ENCODE measurements at regions of chr1 and their contacts with region 1.

Region 1: DNA sequence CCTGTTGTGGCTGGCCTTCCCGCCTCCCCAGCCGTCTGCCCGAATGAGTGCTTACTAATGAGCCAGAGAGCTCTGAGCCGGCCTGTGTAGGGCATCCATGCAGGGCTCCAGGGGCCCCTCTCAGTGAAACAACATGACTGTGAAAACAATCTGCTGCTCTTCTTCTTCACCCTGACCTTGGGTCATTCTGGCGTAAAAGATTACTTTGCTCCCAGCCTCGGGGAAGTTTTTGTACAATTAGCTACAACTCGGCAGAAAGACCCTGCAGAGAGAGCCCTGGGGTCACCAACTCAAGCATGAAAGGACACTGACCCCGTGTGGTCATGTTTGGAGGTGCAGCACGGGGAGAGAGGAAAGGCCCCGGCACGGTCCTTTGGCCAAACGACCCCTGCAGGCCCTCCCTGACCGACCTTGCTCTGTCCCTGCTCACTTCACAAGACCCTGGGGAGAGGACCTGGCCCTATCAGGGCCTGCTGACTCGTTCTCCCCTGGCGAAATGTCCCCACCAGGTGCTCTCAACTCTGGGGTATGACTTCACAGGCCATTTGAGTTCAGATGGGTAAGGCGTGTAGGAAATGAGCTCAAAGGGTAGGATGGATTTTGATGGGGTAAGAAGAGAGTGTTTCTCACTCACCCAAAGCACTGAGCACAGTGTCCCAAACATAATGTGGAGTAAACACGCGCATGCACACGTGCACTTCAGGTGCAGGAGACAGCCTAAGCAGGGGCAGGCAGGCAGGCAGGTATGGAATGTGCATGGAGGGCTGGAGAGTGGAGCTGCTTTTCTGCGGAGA is 22.9 kb upstream of the FAM20B start:
- DNase-seq: peak; percentile 97
- ATAC-seq: peak; percentile 97
- H3K4me3 Mint-ChIP-seq: peak overlapping the region; percentile 51
- H3K27ac Mint-ChIP-seq: peak overlapping the region; percentile 71; the same call in 1 of the 2 replicates
- H3K4me1 Mint-ChIP-seq: peaks cover 10% of the 10 kb centered on the region
- H3K27me3 Mint-ChIP-seq: no peaks in the 10 kb centered on the region; the same call in 1 of the 2 replicates
- CTCF ChIP-seq: peak; percentile 94

Region 2: GRCh38 chr1:178542560-178543356 is 460.0 kb before region 1 on chr1:
- CTCF ChIA-PET with region 1: interaction called, 86 read pairs
- POLR2A ChIA-PET with region 1: interaction called, 3 read pairs
- DNase-seq: peak; percentile 97
- ATAC-seq: peak; percentile 76
- H3K4me3 Mint-ChIP-seq: peak overlapping the region; percentile 87
- H3K27ac Mint-ChIP-seq: peak overlapping the region; percentile 91
- H3K4me1 Mint-ChIP-seq: peaks cover 23% of the 10 kb centered on the region
- H3K27me3 Mint-ChIP-seq: no peaks in the 10 kb centered on the region; the same call in 1 of the 2 replicates
- CTCF ChIP-seq: peak; percentile 100

Region 3: DNA sequence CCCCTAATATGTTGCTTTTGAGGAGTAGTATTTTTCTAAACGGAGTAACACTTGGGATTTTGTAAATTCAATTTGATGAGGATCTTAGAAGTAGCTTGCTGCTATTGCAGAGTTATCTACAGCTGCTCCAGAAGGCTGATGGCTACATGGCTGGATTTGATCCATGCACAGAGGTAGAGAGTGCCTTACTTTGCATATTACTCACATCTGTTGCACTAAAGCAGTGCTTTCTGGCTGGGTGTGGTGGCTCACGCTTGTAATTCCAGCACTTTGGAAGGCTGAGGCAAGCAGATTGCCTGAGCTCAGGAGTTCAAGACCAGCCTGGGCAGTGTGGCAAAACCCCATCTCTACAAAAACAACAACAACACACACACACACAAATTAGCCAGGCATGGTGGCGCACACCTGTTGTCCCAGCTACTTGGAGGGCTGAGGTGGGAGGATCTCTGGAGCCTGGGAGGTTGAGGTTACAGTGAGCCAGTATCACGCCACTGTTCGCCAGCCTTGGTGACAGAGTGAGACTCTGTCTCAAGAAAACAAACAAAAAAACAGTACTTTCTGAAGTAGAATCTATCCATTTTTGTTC is 253.1 kb before region 1 on chr1:
- CTCF ChIA-PET with region 1: interaction called, 32 read pairs
- POLR2A ChIA-PET with region 1: no interaction called
- DNase-seq: no peak
- ATAC-seq: no peak
- H3K4me3 Mint-ChIP-seq: no peak overlapping the region
- H3K27ac Mint-ChIP-seq: peak overlapping the region; percentile 29; the same call in 1 of the 2 replicates
- H3K4me1 Mint-ChIP-seq: no peaks in the 10 kb centered on the region
- H3K27me3 Mint-ChIP-seq: no peaks in the 10 kb centered on the region
- CTCF ChIP-seq: no peak

Region 4: DNA sequence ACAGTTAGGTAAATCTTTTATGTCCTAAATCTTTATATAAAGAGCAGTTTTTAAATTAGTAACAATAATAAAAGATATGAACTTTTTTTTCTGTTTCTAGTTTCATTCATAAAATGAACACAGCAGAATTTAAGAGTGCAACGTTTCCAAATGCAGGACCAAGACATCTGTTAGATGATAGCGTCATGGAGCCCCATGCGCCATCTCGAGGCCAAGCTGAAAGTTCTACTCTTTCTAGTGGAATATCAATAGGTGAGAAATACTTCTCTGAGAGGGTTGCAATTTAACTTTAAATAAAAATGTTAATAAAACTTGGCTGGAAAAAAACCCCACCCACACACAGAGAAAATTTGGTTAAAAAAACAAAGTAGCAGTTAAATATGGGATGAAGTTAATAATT is 116.9 kb before region 1 on chr1:
- CTCF ChIA-PET with region 1: interaction called, 11 read pairs
- POLR2A ChIA-PET with region 1: no interaction called
- DNase-seq: no peak
- ATAC-seq: no peak
- H3K4me3 Mint-ChIP-seq: no peak overlapping the region
- H3K27ac Mint-ChIP-seq: no peak overlapping the region
- H3K4me1 Mint-ChIP-seq: no peaks in the 10 kb centered on the region
- H3K27me3 Mint-ChIP-seq: no peaks in the 10 kb centered on the region
- CTCF ChIP-seq: no peak

Region 5: DNA sequence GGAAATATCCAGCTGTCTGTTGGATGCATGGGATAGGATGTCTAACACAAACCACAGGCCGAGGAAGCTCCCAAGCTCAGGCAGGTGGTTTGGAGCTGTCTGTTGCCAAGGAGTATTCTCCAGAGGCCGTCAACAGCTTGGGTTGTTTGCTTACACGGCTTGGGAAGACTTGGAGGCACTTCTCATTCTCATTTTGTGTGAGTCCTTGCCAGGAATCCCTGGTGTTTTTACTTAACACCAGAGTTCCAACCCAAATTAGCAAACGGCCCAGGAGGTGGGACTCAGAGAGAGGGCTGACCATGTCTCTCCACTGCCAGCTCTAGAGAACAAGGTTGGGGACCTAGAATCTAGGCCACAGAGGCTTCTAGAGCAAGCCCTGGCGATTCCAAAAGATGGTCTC is 49.7 kb before region 1 on chr1:
- CTCF ChIA-PET with region 1: interaction called, 14 read pairs
- POLR2A ChIA-PET with region 1: no interaction called
- DNase-seq: no peak
- ATAC-seq: no peak
- H3K4me3 Mint-ChIP-seq: no peak overlapping the region
- H3K27ac Mint-ChIP-seq: no peak overlapping the region
- H3K4me1 Mint-ChIP-seq: no peaks in the 10 kb centered on the region
- H3K27me3 Mint-ChIP-seq: no peaks in the 10 kb centered on the region
- CTCF ChIP-seq: no peak

Region 6: DNA sequence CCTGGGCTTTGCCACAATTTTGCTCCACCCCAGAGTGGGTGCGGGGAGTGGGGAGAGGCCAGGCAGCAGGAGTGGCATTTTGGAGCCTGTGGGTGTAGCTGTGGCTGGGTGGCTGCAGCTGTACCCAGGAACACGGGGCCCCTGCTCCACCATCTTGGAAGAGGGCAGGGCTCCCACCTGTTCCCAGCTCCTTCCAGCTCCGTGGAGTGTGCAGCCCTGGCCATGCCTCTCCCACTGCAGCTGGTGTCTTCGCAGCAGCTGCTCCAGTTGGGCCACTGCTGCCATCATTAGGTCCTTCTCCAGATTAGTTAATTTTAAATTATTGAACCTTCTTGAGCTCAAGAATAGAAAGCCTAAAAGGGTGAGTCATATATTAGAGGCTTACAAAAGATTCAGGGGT is 40.5 kb after region 1 on chr1:
- CTCF ChIA-PET with region 1: interaction called, 11 read pairs
- POLR2A ChIA-PET with region 1: no interaction called
- DNase-seq: no peak
- ATAC-seq: no peak
- H3K4me3 Mint-ChIP-seq: no peak overlapping the region
- H3K27ac Mint-ChIP-seq: no peak overlapping the region
- H3K4me1 Mint-ChIP-seq: peaks cover 11% of the 10 kb centered on the region
- H3K27me3 Mint-ChIP-seq: no peaks in the 10 kb centered on the region
- CTCF ChIP-seq: no peak